ENCODE measurements at regions of chr22 and their contacts with region 1.

Region 1: DNA sequence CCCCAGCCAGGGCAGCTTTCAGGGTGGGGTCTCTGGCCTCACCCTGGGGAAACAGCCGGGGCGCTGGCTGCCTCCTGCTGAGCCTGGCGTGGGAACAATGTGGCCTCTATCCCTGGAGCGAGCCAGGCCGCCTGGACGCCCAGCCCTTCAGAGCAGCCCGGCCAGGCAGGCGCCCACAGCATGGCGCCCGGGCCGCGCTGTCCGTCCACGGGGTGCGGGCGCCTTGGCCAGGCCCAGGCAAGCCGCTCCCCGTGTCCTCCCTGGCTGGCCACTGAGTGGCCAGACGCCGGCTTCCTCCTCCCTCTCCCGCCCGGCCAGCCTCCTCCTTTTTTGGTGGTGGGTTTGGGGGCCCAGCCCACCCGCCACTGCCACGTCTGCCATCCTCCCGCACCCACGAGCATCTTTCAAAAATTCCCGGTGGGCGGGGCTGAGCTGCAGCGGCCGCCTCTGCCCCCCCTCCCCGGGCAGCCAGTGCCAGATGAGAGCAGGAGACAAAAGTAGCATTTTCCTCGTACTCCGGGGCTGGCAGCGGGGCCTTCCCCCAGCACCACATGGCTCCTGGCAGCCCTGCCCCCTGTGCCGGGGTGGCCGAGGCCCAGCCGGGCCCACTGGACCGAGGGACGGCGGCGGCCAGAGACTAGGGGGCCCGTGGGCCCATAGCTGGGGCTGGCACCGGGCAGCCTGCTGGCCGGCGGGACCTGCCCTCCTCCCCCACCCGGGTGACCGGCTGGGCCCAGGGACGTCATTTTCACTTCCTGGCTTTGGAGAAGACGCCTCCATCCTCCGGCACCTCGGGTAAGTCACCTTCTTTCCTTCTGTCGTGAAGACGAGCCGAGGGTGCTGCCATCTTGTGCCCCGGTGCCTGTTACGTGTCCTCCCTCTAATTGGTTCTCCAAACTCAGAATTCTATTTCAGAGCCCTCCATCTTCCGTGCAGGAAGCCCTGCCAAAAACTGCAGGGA is 70.2 kb upstream of the PPARA start:
- DNase-seq: peak; percentile 90
- H3K4me3 Mint-ChIP-seq: peak overlapping the region; percentile 96
- H3K27ac Mint-ChIP-seq: peak overlapping the region; percentile 100
- H3K4me1 Mint-ChIP-seq: peaks cover 27% of the 10 kb centered on the region
- H3K27me3 Mint-ChIP-seq: no peaks in the 10 kb centered on the region
- CTCF ChIP-seq: no peak

Region 2: GRCh38 chr22:46044621-46045438 is 35.3 kb before region 1 on chr22:
- CTCF ChIA-PET with region 1: interaction called, 3 read pairs
- POLR2A ChIA-PET with region 1: interaction called, 1,278 read pairs
- intact Hi-C with region 1: no loop called
- DNase-seq: no peak
- H3K4me3 Mint-ChIP-seq: peak overlapping the region; percentile 79
- H3K27ac Mint-ChIP-seq: peak overlapping the region; percentile 97
- H3K4me1 Mint-ChIP-seq: peaks cover 14% of the 10 kb centered on the region
- H3K27me3 Mint-ChIP-seq: no peaks in the 10 kb centered on the region
- CTCF ChIP-seq: no peak

Region 3: DNA sequence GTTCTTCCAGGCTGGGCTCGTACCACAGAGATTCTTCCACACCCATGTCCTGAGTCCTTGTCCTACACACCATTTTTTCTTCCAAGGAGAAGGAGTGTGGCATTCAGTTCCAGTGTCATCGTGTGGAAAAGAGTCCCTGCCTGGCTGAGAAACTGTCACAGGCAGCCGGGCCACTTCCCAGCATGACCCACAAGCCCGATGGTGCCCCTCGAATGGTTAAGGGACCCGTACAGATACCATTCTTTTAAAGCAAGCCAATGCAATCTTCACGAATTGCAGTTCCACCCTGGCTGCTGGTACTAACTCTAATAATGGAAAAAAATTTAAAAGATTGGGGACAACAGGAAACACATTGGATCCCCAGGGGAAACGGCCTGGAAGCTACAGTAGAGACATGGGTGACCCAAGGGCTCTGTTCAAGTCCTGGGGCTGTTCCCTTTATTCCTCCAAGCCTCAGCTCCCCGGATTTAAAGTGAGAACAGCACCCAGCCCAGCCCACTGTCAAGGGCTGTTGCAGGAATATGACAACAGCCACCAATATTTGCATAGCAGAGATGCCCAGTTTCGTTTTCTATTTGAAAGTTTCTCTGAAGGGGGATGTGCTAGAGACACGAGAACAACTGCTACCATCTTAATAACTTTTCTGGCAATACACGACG is 22.2 kb before region 1 on chr22:
- CTCF ChIA-PET with region 1: interaction called, 16 read pairs
- POLR2A ChIA-PET with region 1: interaction called, 1,278 read pairs
- intact Hi-C with region 1: loop called (anchors 2 kb)
- DNase-seq: peak; percentile 87
- H3K4me3 Mint-ChIP-seq: peak overlapping the region; percentile 81
- H3K27ac Mint-ChIP-seq: peak overlapping the region; percentile 98
- H3K4me1 Mint-ChIP-seq: peaks cover 33% of the 10 kb centered on the region
- H3K27me3 Mint-ChIP-seq: no peaks in the 10 kb centered on the region
- CTCF ChIP-seq: no peak

Region 4: GRCh38 chr22:46064228-46064965 is 15.7 kb before region 1 on chr22:
- CTCF ChIA-PET with region 1: interaction called, 16 read pairs
- POLR2A ChIA-PET with region 1: interaction called, 1,278 read pairs
- intact Hi-C with region 1: loop called (anchors 2 kb)
- DNase-seq: peak; percentile 61
- H3K4me3 Mint-ChIP-seq: peak overlapping the region; percentile 74
- H3K27ac Mint-ChIP-seq: peak overlapping the region; percentile 100
- H3K4me1 Mint-ChIP-seq: peaks cover 54% of the 10 kb centered on the region
- H3K27me3 Mint-ChIP-seq: no peaks in the 10 kb centered on the region
- CTCF ChIP-seq: no peak

Region 5: GRCh38 chr22:46108564-46109473 is 28.7 kb after region 1 on chr22:
- CTCF ChIA-PET with region 1: interaction called, 3 read pairs
- POLR2A ChIA-PET with region 1: interaction called, 21 read pairs
- intact Hi-C with region 1: loop called (anchors 2 kb)
- DNase-seq: peak; percentile 72
- H3K4me3 Mint-ChIP-seq: peak overlapping the region; percentile 12
- H3K27ac Mint-ChIP-seq: peak overlapping the region; percentile 93
- H3K4me1 Mint-ChIP-seq: peaks cover 34% of the 10 kb centered on the region
- H3K27me3 Mint-ChIP-seq: no peaks in the 10 kb centered on the region
- CTCF ChIP-seq: peak; percentile 7

Measured in MCF 10A (cell line).